ENCODE measurements at regions of chr15 and their contacts with region 1.

Region 1: DNA sequence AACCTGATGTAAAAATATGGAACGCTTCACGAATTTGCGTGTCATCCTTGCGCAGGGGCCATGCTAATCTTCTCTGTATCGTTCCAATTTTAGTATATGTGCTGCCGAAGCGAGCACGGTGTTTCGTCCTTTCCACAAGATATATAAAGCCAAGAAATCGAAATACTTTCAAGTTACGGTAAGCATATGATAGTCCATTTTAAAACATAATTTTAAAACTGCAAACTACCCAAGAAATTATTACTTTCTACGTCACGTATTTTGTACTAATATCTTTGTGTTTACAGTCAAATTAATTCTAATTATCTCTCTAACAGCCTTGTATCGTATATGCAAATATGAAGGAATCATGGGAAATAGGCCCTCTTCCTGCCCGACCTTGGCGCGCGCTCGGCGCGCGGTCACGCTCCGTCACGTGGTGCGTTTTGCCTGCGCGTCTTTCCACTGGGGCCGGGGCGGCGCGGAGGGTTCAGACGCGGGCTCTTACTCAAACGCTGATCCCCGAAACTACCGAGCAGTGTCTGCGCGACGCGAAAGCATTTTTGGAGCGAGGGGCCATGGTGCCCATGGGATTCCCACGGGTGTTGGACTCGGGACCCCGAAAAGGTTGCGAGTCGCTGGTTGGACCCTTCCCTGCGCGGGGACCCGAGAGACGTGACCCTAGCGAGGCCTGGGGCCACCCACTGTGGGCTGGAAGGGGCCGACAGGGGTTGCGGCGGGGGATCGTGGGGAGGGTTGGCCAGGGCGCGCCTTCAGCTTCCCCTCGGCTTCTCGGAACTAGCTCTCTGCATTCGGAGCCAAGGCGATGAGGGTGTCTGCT is at the start of gene RNU6-1:
- DNase-seq: peak; percentile 92 to 97 (median 96)
- ATAC-seq: peak; percentile 78
- H3K4me3 ChIP-seq: peak within 1 kb of the TSS; percentile 87 to 89
- H3K4me3 Mint-ChIP-seq: peak within 1 kb of the TSS; percentile 91
- H3K27ac ChIP-seq: peak within 1 kb of the TSS; percentile 91 to 94
- H3K27ac Mint-ChIP-seq: peak within 1 kb of the TSS; percentile 97
- H3K4me1 ChIP-seq: peaks cover 31% of the 10 kb centered on the region
- H3K4me1 Mint-ChIP-seq: peaks cover 34% of the 10 kb centered on the region
- H3K27me3 ChIP-seq: peaks cover 11% of the 10 kb centered on the region in 2 experiments
- H3K27me3 Mint-ChIP-seq: peaks cover 5% of the 10 kb centered on the region
- CTCF ChIP-seq: no peak
- total RNA-seq, gene RNU6-1: not detected

Region 2: GRCh38 chr15:67065444-67066093 is 774.6 kb before region 1 on chr15 and contains the start of gene SMAD3:
- CTCF ChIA-PET with region 1: no interaction called
- POLR2A ChIA-PET with region 1: no interaction called
- intact Hi-C with region 1: loop called in 1 of 2 experiments (anchors 10 kb)
- DNase-seq: peak; percentile 38 to 89 (median 71)
- ATAC-seq: peak; percentile 63
- H3K4me3 ChIP-seq: peak within 1 kb of the TSS; percentile 86 to 89
- H3K4me3 Mint-ChIP-seq: peak within 1 kb of the TSS; percentile 87
- H3K27ac ChIP-seq: peak within 1 kb of the TSS; percentile 44 to 51
- H3K27ac Mint-ChIP-seq: peak within 1 kb of the TSS; percentile 75
- H3K4me1 ChIP-seq: peaks cover 37% of the 10 kb centered on the region
- H3K4me1 Mint-ChIP-seq: peaks cover 49% of the 10 kb centered on the region
- H3K27me3 ChIP-seq: no peaks in the 10 kb centered on the region
- H3K27me3 Mint-ChIP-seq: no peaks in the 10 kb centered on the region
- CTCF ChIP-seq: no peak
- total RNA-seq, gene SMAD3: 25.4 to 29.0 TPM

Region 3: DNA sequence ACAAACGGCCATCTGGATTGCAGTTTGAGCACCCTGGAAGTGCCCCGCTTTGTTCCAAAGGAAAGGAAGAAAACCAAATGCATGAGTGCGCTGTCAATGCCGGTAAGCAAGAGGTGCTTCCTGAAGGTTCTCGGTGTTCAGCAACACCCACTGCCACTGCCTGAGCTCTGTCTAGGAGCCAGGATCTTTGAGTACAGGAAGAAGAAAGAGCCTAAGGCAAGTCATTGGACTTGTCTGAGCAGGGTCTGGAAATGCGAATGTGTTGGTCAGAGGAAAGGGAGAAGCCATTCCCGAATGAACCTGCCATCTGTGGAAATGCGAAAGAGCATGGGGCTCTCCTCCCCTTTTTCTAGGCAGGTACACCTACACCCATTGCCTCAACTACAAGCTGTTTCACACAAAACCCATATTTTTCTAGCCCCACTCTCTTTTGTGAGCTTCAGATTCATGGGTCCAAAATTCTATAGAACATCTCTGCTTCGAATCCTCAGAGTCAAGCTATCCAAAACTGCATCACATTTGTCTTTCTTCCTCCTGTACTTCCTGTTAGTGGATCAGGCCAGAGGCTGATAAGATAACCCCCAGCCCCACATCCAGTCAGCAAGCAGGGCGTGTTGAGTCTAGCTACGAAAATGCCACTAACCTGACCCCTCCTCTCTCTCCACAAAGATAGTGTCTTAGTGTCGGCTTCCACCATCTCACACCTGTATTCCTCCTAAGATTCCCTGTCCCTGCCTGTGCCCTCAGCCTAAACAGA is 374.8 kb before region 1 on chr15:
- CTCF ChIA-PET with region 1: interaction called, 98 read pairs
- POLR2A ChIA-PET with region 1: no interaction called
- intact Hi-C with region 1: no loop called
- DNase-seq: no peak
- ATAC-seq: no peak
- H3K4me3 ChIP-seq: no peak overlapping the region
- H3K4me3 Mint-ChIP-seq: no peak overlapping the region
- H3K27ac ChIP-seq: no peak overlapping the region
- H3K27ac Mint-ChIP-seq: no peak overlapping the region
- H3K4me1 ChIP-seq: no peaks in the 10 kb centered on the region
- H3K4me1 Mint-ChIP-seq: no peaks in the 10 kb centered on the region
- H3K27me3 ChIP-seq: no peaks in the 10 kb centered on the region
- H3K27me3 Mint-ChIP-seq: no peaks in the 10 kb centered on the region
- CTCF ChIP-seq: no peak

Region 4: GRCh38 chr15:67542420-67543347 is 297.5 kb before region 1 on chr15 and contains the start of gene MAP2K5:
- CTCF ChIA-PET with region 1: interaction called, 3 read pairs
- POLR2A ChIA-PET with region 1: interaction called, 5 read pairs
- intact Hi-C with region 1: loop called (anchors 1 kb)
- DNase-seq: peak; percentile 57 to 91 (median 82)
- ATAC-seq: peak; percentile 71
- H3K4me3 ChIP-seq: peak within 1 kb of the TSS; percentile 91 to 93
- H3K4me3 Mint-ChIP-seq: peak within 1 kb of the TSS; percentile 97
- H3K27ac ChIP-seq: peak within 1 kb of the TSS; percentile 81 to 86
- H3K27ac Mint-ChIP-seq: peak within 1 kb of the TSS; percentile 99
- H3K4me1 ChIP-seq: peaks cover 24% of the 10 kb centered on the region
- H3K4me1 Mint-ChIP-seq: peaks cover 56% of the 10 kb centered on the region
- H3K27me3 ChIP-seq: no peaks in the 10 kb centered on the region
- H3K27me3 Mint-ChIP-seq: no peaks in the 10 kb centered on the region
- CTCF ChIP-seq: no peak
- total RNA-seq, gene MAP2K5: 20.5 to 21.2 TPM

Region 5: GRCh38 chr15:68229386-68230156 is 389.4 kb after region 1 on chr15 and contains the start of gene CLN6:
- CTCF ChIA-PET with region 1: no interaction called
- POLR2A ChIA-PET with region 1: no interaction called
- intact Hi-C with region 1: loop called in 1 of 2 experiments (anchors 1 kb)
- DNase-seq: peak; percentile 55 to 91 (median 80)
- ATAC-seq: peak; percentile 87
- H3K4me3 ChIP-seq: peak within 1 kb of the TSS; percentile 86 to 90
- H3K4me3 Mint-ChIP-seq: peak within 1 kb of the TSS; percentile 93
- H3K27ac ChIP-seq: peak within 1 kb of the TSS; percentile 60 to 62
- H3K27ac Mint-ChIP-seq: peak within 1 kb of the TSS; percentile 88
- H3K4me1 ChIP-seq: peaks cover 23% of the 10 kb centered on the region
- H3K4me1 Mint-ChIP-seq: peaks cover 36% of the 10 kb centered on the region
- H3K27me3 ChIP-seq: no peaks in the 10 kb centered on the region
- H3K27me3 Mint-ChIP-seq: peaks cover 5% of the 10 kb centered on the region
- CTCF ChIP-seq: peak; percentile 27
- total RNA-seq, gene CLN6: 7.6 to 7.9 TPM